PC-3 (cell line): ENCODE measurements at regions of chr3 and their contacts with region 1.

Region 1: DNA sequence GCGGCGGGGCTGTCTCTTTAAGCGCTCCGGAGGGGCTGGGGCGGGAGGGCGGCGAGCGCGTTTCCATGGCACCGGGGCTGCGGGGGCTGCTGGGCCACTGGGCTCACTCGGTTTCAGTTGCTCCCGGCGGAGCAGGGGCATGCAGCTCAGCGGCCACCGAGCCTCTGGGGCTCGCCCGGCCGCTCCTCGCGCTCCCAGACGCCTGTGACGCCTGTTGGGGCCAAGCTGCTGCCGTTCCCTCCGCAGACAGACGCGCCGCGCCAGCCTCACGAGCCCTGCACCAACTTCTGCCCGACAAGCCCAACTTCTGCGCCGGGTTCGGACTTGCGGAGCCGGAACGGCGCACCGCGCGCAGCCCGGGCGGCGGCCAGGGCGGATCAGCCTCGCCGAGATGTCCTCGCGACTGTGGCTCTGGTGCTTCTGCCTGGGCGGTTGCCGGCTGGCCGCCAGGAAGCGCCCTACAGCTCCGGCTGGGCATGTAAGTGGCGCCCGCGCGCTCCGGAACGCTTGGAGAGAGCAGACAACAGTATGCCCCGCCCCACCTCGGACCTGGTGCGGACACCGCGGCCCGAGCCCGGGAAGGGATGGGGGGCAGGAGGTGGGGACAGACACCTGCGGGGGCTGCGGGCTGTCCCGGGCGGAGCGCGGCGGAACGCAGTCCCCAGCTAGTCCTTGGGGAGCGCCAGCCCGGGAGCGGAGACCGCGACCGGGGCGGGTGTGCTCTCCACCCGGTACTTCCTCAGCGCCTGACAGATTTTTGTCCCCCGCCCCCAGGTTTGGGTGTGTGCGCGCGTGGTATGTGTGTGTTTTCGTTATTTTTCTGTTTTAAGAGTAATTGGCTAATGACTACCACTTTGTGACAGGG is 154.1 kb upstream of the GOLIM4 start:
- DNase-seq: peak; percentile 77
- ATAC-seq: peak; percentile 85
- H3K4me3 ChIP-seq: peak overlapping the region; percentile 66
- H3K27ac ChIP-seq: no peak overlapping the region
- H3K4me1 ChIP-seq: peaks cover 11% of the 10 kb centered on the region; the same call in 1 of the 2 replicates
- H3K27me3 ChIP-seq: peaks cover 10% of the 10 kb centered on the region; the same call in 1 of the 2 replicates
- CTCF ChIP-seq: peak; percentile 58

Region 2: DNA sequence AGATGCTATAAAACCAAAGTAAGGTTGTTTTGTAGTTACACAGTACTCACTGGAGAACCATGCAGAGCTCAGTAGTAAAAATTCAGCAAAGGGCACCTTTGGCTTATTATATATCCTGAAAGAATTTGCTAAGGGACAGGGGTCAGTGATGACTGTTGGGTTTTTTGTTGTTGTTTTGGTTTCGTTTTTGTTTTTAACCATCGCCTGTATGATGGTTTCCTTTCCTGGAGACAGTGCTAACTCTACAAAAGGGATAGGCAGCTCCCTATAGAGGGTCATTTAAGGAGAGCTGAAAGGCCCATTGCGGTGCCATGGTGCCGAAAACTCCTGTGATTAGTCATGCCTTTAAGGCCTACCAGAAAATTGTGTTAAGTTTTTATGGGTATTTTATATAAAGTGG is 35.9 kb before region 1 on chr3:
- CTCF ChIA-PET with region 1: no interaction called
- POLR2A ChIA-PET with region 1: no interaction called
- intact Hi-C with region 1: loop called (anchors 1 kb)
- DNase-seq: no peak
- ATAC-seq: no peak
- H3K4me3 ChIP-seq: no peak overlapping the region
- H3K27ac ChIP-seq: no peak overlapping the region
- H3K4me1 ChIP-seq: no peaks in the 10 kb centered on the region
- H3K27me3 ChIP-seq: no peaks in the 10 kb centered on the region
- CTCF ChIP-seq: no peak

Region 3: DNA sequence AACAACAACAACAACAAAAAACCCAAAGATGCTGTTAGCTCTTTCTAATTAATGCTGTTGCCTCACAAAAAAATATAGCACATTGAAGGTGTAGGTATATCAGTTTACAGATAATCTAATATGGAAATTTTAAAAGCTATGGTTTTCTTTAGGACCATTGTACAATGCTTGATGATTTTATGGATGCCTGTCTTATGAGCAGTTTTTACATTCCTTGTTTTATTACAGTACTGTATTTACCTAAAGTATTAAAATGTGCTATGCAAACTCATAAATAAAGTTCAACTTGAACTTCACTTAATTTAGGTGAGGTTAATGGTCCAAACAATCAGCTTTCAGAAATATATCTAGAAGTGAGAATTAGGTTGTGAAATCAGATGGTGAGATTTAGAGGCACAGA is 58.1 kb after region 1 on chr3:
- CTCF ChIA-PET with region 1: no interaction called
- POLR2A ChIA-PET with region 1: no interaction called
- intact Hi-C with region 1: loop called (anchors 2 kb)
- DNase-seq: peak; percentile 30
- ATAC-seq: peak; percentile 91
- H3K4me3 ChIP-seq: no peak overlapping the region
- H3K27ac ChIP-seq: no peak overlapping the region
- H3K4me1 ChIP-seq: peaks cover 11% of the 10 kb centered on the region; the same call in 1 of the 2 replicates
- H3K27me3 ChIP-seq: no peaks in the 10 kb centered on the region
- CTCF ChIP-seq: no peak

Region 4: DNA sequence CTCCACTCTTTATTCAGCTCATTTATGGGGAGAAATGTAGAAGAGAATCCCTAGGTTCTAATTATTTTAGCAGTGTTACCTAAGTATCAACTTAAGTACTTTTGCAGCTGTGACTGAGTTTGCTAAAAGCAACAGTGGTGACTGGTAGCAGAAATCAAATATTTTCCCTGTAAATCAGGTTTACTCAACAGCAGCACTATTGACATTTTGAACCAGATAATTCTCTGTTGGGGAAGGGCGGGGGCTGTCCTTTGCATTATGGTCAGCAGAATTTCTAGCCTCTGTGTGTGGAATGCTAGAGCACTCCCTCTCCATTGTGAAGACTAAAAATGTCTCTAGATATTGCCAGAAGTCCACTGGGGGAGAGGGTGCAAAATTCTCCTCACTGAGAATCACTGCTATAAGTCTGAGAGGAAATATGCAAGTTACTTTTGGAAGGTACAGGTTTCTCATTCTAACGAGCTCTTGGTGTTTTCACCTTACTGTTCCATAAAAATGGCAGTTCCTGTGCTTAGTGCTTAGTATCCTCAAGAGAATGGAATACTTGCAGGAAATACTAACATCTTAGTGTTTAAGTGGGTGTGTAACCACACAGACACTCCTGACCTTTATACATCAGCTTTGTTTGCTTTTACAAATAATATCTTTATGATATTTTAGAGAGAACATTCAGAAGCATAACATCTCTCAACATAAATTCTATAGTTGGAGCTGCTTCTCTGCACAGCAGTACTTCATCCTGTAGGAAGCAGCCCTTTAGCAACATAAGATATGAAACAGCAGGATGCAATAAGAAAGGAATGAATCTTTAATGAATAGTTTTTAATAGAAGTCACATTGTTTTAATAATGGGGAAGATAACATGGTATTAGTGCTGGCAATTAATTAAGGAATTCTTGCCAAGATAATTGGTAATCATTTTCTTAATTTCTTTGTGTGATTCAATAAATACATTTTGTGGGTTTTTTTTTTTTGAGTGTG is 92.5 kb after region 1 on chr3:
- CTCF ChIA-PET with region 1: interaction called, 4 read pairs
- POLR2A ChIA-PET with region 1: interaction called, 3 read pairs
- intact Hi-C with region 1: loop called (anchors 2 kb)
- DNase-seq: peak; percentile 61
- ATAC-seq: peak; percentile 77
- H3K4me3 ChIP-seq: peak overlapping the region; percentile 29
- H3K27ac ChIP-seq: peak overlapping the region; percentile 48
- H3K4me1 ChIP-seq: peaks cover 38% of the 10 kb centered on the region
- H3K27me3 ChIP-seq: no peaks in the 10 kb centered on the region
- CTCF ChIP-seq: no peak

Region 5: GRCh38 chr3:168419091-168419490 is 169.3 kb after region 1 on chr3:
- CTCF ChIA-PET with region 1: no interaction called
- POLR2A ChIA-PET with region 1: no interaction called
- intact Hi-C with region 1: loop called (anchors 1 kb)
- DNase-seq: peak; percentile 42
- ATAC-seq: no peak
- H3K4me3 ChIP-seq: no peak overlapping the region
- H3K27ac ChIP-seq: no peak overlapping the region
- H3K4me1 ChIP-seq: peaks cover 47% of the 10 kb centered on the region
- H3K27me3 ChIP-seq: no peaks in the 10 kb centered on the region
- CTCF ChIP-seq: no peak

Region 6: GRCh38 chr3:168459226-168459784 is 209.5 kb after region 1 on chr3:
- CTCF ChIA-PET with region 1: no interaction called
- POLR2A ChIA-PET with region 1: interaction called, 3 read pairs
- intact Hi-C with region 1: loop called (anchors 2 kb)
- DNase-seq: peak; percentile 62
- ATAC-seq: peak; percentile 43
- H3K4me3 ChIP-seq: no peak overlapping the region
- H3K27ac ChIP-seq: 0 out of 2 replicates have a peak overlapping the region, but pooled peaks have one; percentile 27
- H3K4me1 ChIP-seq: peaks cover 17% of the 10 kb centered on the region
- H3K27me3 ChIP-seq: no peaks in the 10 kb centered on the region
- CTCF ChIP-seq: no peak

Region 7: DNA sequence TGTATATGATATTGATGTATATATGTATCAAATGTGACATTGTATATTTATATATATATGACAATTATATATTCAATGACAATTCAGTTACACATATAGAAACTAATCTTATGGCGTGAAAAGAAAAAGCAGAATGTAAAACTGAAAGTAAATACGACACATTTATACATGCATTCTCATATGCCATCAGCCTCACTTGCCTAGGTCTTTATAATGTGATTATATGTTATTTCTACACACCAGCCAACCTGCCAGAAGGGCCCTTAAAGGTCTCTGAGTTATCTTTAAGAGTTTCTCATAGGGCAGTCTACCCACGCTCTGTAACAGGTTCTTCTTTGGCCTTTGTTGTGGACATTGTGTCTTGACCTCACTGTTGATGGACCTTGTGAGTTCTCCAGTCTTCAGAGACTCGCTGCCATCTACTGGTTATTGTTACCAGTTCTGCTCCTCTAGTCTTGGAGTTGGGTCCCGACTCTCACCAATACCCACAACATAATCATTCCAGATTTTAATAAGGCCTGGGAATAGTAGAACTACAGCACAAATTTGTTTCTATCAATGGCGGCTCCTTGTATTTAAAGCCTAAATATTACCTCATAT is 217.4 kb after region 1 on chr3:
- CTCF ChIA-PET with region 1: no interaction called
- POLR2A ChIA-PET with region 1: interaction called, 3 read pairs
- intact Hi-C with region 1: loop called (anchors 1 kb)
- DNase-seq: peak; percentile 64
- ATAC-seq: peak; percentile 98
- H3K4me3 ChIP-seq: no peak overlapping the region
- H3K27ac ChIP-seq: no peak overlapping the region
- H3K4me1 ChIP-seq: no peaks in the 10 kb centered on the region
- H3K27me3 ChIP-seq: no peaks in the 10 kb centered on the region
- CTCF ChIP-seq: peak; percentile 79